GM10248 (cell line): ENCODE measurements at regions of chr2 and their contacts with region 1.

Region 1: GRCh38 chr2:177604271-177605065 is 211.9 kb downstream of the AGPS start:
- DNase-seq: peak; percentile 36
- CTCF ChIP-seq: peak; percentile 65

Region 2: GRCh38 chr2:177618255-177619253 is 14.1 kb after region 1 on chr2:
- CTCF ChIA-PET with region 1: interaction called, 17 read pairs
- POLR2A ChIA-PET with region 1: no interaction called
- DNase-seq: peak; percentile 90
- CTCF ChIP-seq: no peak

Region 3: GRCh38 chr2:177629357-177630024 is 25.0 kb after region 1 on chr2:
- CTCF ChIA-PET with region 1: interaction called, 20 read pairs
- POLR2A ChIA-PET with region 1: no interaction called
- DNase-seq: no peak
- CTCF ChIP-seq: no peak